Ascending aorta (tissue), 2 donors: ENCODE measurements at regions of chr10 and their contacts with region 1.

Region 1: DNA sequence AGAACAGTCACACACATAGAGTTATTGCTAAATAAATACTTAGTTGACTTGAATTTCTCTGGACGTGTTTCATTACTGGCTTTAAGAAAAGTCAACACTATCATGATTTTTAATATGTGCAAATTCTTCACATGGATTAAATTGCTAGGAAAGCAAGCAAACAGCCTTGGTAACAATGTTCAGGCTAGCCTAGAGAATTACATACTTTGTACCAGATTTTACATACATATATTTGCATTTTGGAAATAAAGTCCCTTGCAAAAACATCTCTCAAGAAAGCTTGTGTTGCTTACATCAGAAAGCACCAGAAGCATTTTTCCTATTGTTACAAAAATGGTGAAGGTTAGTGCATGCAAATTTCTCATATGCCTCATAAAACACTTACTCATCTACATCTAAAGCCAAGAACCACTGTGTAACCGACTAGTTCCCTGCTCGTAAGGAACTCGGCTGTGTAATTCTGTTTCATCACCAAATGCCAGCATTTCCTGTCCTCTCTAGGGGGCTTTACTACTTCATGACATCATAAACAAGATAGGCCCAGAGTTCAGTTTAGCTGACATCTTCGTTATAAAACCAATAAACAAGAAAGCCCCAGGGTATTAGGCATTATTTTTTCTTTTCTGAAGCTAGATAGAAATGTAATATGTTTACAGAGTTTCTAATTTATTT is 87.8 kb downstream of the CFAP58 start:
- DNase-seq: no peak
- H3K4me3 ChIP-seq: no peak overlapping the region
- H3K27ac ChIP-seq: peak overlapping the region in 1 of 2 donors; percentile 19
- H3K4me1 ChIP-seq: peaks cover 0 to 8% of the 10 kb centered on the region in 2 donors
- H3K27me3 ChIP-seq: no peaks in the 10 kb centered on the region
- CTCF ChIP-seq: no peak

Region 2: GRCh38 chr10:104291439-104291951 is 150.0 kb before region 1 on chr10:
- intact Hi-C with region 1: loop called (anchors 10 kb)
- DNase-seq: peak; percentile 59 to 95
- H3K4me3 ChIP-seq: peak overlapping the region in 1 of 2 donors; percentile 6
- H3K27ac ChIP-seq: no peak overlapping the region
- H3K4me1 ChIP-seq: peaks cover 0 to 3% of the 10 kb centered on the region in 2 donors
- H3K27me3 ChIP-seq: no peaks in the 10 kb centered on the region
- CTCF ChIP-seq: peak; percentile 99 to 100 (median 100)

Region 3: DNA sequence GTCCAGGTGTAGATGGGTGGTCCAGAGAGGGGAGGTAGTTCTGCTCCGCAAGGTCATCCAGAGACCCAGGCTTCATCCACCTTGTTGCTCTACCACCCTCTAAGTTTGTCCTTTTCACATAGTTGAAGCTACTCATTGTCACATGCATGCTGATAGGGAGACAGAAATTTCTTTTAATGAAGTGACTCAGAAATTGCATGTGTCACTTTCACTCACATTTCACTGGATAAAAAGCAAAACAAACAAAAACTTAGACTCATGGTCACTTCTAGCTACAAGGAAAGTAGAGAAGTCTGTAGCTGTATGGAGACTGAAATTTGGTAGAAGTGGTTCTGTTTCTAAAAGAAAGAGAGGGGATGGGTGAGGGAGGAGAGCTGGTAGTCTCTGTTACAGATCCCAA is 361.5 kb after region 1 on chr10:
- intact Hi-C with region 1: no loop called
- DNase-seq: no peak
- H3K4me3 ChIP-seq: no peak overlapping the region
- H3K27ac ChIP-seq: no peak overlapping the region
- H3K4me1 ChIP-seq: no peaks in the 10 kb centered on the region
- H3K27me3 ChIP-seq: no peaks in the 10 kb centered on the region
- CTCF ChIP-seq: no peak